Naive thymus-derived CD4-positive, alpha-beta T cell (primary cell): ENCODE measurements at regions of chr1 and their contacts with region 1.

Region 1: GRCh38 chr1:203326830-203327683 is 21.7 kb downstream of the BTG2 start:
- DNase-seq: peak; percentile 90 to 96 (median 94)
- ATAC-seq: peak; percentile 84
- H3K4me3 ChIP-seq: peak overlapping the region; percentile 72
- H3K4me3 Mint-ChIP-seq: peak overlapping the region; percentile 80 to 89 (median 86)
- H3K27ac ChIP-seq: peak overlapping the region; percentile 98
- H3K27ac Mint-ChIP-seq: peak overlapping the region; percentile 90 to 100 (median 99)
- H3K4me1 ChIP-seq: peaks cover 55 to 56% of the 10 kb centered on the region in 2 donors
- H3K4me1 Mint-ChIP-seq: peaks cover 40 to 73% (median 70%) of the 10 kb centered on the region in 7 donors
- H3K27me3 ChIP-seq: no peaks in the 10 kb centered on the region
- H3K27me3 Mint-ChIP-seq: no peaks in the 10 kb centered on the region

Region 2: GRCh38 chr1:203026031-203026989 is 300.7 kb before region 1 on chr1 and contains the start of gene PPFIA4:
- CTCF ChIA-PET with region 1: no interaction called
- POLR2A ChIA-PET with region 1: no interaction called
- intact Hi-C with region 1: loop called (anchors 5 to 10 kb)
- DNase-seq: peak; percentile 72 to 94 (median 89)
- ATAC-seq: peak; percentile 98
- H3K4me3 ChIP-seq: peak within 1 kb of the TSS; percentile 84
- H3K4me3 Mint-ChIP-seq: peak within 1 kb of the TSS; percentile 74 to 95 (median 84)
- H3K27ac ChIP-seq: peak within 1 kb of the TSS; percentile 53
- H3K27ac Mint-ChIP-seq: peak within 1 kb of the TSS; percentile 73 to 96 (median 85)
- H3K4me1 ChIP-seq: peaks cover 0 to 11% of the 10 kb centered on the region in 2 donors
- H3K4me1 Mint-ChIP-seq: peaks cover 0 to 24% (median 14%) of the 10 kb centered on the region in 7 donors
- H3K27me3 ChIP-seq: no peaks in the 10 kb centered on the region
- H3K27me3 Mint-ChIP-seq: peaks cover 0 to 9% (median 0%) of the 10 kb centered on the region in 5 donors
- total RNA-seq, gene PPFIA4: 0.40 to 45.5 (median 2.4) TPM

Region 3: DNA sequence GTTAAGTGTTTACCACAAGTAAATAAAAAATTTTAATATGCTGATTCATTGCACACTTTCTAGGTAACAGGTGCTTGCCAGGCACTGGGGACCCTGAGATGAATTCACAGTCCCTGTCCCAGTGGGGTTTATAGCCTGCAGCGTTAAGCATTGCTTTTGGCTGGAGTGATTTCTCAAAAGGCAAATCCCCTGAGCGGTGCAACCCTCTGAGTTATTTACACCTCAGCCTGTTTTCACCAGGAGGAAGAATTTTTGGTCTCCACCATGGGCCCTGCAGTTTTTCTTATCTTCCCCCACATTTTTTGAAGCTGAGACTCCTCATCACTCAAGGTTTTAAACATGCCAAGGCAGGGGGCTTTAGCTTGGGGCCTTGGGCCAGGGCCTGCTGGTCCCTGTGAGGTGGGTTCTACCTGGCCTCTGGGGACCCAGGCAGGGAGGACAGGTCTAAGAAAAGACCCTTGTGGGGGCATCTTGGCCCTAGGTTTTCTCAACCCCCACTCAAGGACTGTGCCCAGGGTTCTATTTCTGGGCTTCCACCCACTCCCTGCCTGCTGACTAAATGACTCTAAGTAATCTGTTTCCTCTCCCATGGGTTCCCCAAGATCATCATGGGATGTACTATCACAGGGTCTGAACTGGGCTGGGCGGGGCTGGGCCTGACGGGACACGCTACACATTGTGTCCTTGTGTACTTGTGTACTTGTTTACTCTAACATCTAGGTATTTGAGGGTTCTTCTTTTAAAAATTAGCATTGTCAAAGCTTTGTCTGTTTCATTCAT is 87.3 kb before region 1 on chr1:
- CTCF ChIA-PET with region 1: no interaction called
- POLR2A ChIA-PET with region 1: no interaction called
- intact Hi-C with region 1: no loop called
- DNase-seq: no peak
- ATAC-seq: no peak
- H3K4me3 ChIP-seq: no peak overlapping the region
- H3K4me3 Mint-ChIP-seq: no peak overlapping the region
- H3K27ac ChIP-seq: no peak overlapping the region
- H3K27ac Mint-ChIP-seq: no peak overlapping the region
- H3K4me1 ChIP-seq: no peaks in the 10 kb centered on the region
- H3K4me1 Mint-ChIP-seq: no peaks in the 10 kb centered on the region
- H3K27me3 ChIP-seq: no peaks in the 10 kb centered on the region
- H3K27me3 Mint-ChIP-seq: peaks cover 29 to 39% (median 33%) of the 10 kb centered on the region in 5 donors

Region 4: DNA sequence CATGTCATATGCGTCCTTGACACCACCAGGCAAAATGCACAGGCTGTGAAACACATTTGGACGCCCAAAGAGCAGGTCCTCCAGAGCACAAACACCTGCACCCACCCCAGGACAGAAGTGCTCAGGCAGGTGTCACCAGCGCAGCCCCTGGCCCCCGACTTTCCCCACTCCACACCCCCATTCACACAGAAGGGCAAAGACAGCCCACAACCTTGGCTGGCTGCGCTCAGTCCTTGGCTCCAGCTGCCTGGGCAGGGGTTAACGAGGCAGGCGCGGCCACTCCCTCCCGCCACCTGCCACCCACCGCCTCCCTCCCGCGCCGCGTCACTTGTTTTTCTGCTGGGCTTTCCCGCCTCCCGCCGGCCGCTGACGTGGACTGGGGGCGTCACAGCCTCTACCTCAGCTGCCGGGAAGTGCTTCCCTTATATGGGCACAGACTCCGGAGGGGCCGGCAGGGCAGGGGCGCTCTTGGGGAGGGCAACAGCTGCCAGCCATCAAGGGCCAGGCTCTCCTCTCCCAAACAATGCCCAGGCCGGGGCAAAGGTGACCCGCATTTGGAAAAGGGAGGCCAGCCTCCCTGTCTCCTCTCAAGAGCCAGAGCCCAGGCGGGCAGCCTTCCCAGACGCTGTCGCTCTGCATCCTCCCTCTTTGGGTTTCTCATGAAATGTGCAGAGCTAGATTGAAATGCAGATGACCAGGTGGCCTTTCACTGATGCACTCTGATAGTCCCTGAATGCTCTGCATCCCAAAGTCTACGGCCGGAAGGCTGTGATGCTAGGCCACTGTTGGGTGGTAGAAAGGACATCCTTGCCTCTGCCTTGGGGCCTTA is 36.6 kb before region 1 on chr1:
- CTCF ChIA-PET with region 1: interaction called, 79 read pairs
- POLR2A ChIA-PET with region 1: interaction called, 1,812 read pairs
- intact Hi-C with region 1: loop called (anchors 1 kb)
- DNase-seq: peak; percentile 95 to 98 (median 97)
- ATAC-seq: peak; percentile 76
- H3K4me3 ChIP-seq: peak overlapping the region; percentile 57
- H3K4me3 Mint-ChIP-seq: peak overlapping the region; percentile 75 to 89 (median 86)
- H3K27ac ChIP-seq: peak overlapping the region; percentile 98
- H3K27ac Mint-ChIP-seq: peak overlapping the region; percentile 97 to 100 (median 99)
- H3K4me1 ChIP-seq: peaks cover 54 to 58% of the 10 kb centered on the region in 2 donors
- H3K4me1 Mint-ChIP-seq: peaks cover 44 to 92% (median 86%) of the 10 kb centered on the region in 7 donors
- H3K27me3 ChIP-seq: no peaks in the 10 kb centered on the region
- H3K27me3 Mint-ChIP-seq: peaks cover 0 to 3% (median 0%) of the 10 kb centered on the region in 5 donors

Region 5: DNA sequence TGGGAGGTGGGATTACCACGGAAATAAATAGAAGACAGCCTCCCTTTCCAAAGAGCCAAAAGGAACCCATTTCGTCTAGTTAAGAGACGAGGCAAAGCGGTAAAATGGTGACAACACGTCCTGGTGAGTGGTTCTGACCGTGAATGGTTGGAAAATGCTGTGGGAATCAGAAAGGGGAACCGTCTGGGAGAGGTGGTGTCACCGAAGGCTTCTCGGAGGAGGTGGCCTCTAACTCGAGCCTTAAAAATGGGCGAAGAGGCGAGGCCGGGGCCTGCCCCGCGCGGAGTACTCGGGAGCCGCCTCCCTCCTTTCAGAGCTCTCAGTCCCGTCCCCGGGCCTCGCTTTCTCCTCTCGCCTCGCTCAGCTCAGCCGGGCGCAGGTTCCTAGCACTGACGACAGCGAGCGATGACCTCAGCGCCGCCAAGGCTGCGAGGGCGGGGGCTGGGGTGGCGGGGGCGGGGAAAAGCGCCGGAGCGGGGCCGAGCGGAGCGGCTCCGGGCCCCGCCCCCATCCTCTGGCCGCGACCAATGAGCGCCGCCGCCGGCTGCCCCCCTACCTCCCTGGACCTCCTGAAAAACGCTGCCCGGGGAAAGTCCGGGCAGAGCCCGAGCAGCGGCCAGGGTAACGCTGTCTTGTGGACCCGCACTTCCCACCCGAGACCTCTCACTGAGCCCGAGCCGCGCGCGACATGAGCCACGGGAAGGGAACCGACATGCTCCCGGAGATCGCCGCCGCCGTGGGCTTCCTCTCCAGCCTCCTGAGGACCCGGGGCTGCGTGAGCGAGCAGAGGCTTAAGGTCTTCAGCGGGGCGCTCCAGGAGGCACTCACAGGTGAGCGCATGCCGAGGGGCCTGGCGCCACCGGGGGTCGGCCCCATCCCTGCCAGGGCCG is 21.9 kb before region 1 on chr1 and contains the start of gene BTG2:
- CTCF ChIA-PET with region 1: interaction called, 137 read pairs
- POLR2A ChIA-PET with region 1: interaction called, 1,016 read pairs
- intact Hi-C with region 1: loop called (anchors 1 kb)
- DNase-seq: peak; percentile 83 to 94 (median 89)
- ATAC-seq: peak; percentile 90
- H3K4me3 ChIP-seq: peak within 1 kb of the TSS; percentile 86
- H3K4me3 Mint-ChIP-seq: peak within 1 kb of the TSS; percentile 89 to 100 (median 96)
- H3K27ac ChIP-seq: peak within 1 kb of the TSS; percentile 100
- H3K27ac Mint-ChIP-seq: peak within 1 kb of the TSS; percentile 96 to 100 (median 99)
- H3K4me1 ChIP-seq: peaks cover 22 to 40% of the 10 kb centered on the region in 2 donors
- H3K4me1 Mint-ChIP-seq: peaks cover 54 to 65% (median 60%) of the 10 kb centered on the region in 7 donors
- H3K27me3 ChIP-seq: no peaks in the 10 kb centered on the region
- H3K27me3 Mint-ChIP-seq: no peaks in the 10 kb centered on the region
- total RNA-seq, gene BTG2: 141 to 654 (median 241) TPM

Region 6: DNA sequence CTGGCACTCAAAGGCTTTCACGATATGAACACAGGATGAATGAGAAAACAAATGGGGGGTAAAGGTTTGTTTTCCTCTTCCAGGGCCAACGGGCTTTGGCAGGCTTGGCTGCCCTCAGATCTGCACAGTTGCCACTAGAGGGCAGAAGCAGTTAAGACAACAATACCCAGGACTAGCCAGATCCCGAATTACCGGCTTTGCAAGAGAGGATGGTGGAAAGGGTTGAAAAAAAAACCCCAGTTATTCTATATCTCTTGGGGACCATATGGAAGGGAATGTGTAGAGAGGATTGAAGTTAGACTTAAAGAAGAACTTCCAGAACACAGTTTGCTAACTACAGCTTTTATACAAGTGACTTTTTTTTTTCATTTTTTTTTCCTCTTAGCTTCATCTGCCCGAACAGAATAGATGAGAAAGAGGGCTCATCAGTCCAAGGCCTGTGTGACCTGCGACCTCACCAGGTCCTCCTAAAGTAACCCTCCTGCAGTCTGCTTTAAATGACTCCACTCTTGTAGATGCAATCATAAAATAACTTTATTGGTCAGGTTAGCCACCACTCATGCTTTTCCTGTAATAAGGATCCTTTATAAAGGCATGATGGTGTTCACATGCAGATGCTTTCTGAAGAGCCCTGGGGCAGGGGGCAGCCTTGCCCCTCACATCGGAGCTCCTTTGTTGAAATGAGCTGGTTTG is 13.2 kb after region 1 on chr1:
- CTCF ChIA-PET with region 1: interaction called, 144 read pairs
- POLR2A ChIA-PET with region 1: interaction called, 113 read pairs
- intact Hi-C with region 1: loop called (anchors 1 kb)
- DNase-seq: peak in 7 of 9 donors; percentile 39 to 68 (median 62)
- ATAC-seq: peak; percentile 80
- H3K4me3 ChIP-seq: no peak overlapping the region
- H3K4me3 Mint-ChIP-seq: no peak overlapping the region
- H3K27ac ChIP-seq: no peak overlapping the region
- H3K27ac Mint-ChIP-seq: peak overlapping the region in 7 of 9 donors; percentile 1 to 75 (median 34)
- H3K4me1 ChIP-seq: peaks cover 9 to 18% of the 10 kb centered on the region in 2 donors
- H3K4me1 Mint-ChIP-seq: peaks cover 24 to 40% (median 34%) of the 10 kb centered on the region in 7 donors
- H3K27me3 ChIP-seq: no peaks in the 10 kb centered on the region
- H3K27me3 Mint-ChIP-seq: peaks cover 0 to 50% (median 6%) of the 10 kb centered on the region in 5 donors

Region 7: DNA sequence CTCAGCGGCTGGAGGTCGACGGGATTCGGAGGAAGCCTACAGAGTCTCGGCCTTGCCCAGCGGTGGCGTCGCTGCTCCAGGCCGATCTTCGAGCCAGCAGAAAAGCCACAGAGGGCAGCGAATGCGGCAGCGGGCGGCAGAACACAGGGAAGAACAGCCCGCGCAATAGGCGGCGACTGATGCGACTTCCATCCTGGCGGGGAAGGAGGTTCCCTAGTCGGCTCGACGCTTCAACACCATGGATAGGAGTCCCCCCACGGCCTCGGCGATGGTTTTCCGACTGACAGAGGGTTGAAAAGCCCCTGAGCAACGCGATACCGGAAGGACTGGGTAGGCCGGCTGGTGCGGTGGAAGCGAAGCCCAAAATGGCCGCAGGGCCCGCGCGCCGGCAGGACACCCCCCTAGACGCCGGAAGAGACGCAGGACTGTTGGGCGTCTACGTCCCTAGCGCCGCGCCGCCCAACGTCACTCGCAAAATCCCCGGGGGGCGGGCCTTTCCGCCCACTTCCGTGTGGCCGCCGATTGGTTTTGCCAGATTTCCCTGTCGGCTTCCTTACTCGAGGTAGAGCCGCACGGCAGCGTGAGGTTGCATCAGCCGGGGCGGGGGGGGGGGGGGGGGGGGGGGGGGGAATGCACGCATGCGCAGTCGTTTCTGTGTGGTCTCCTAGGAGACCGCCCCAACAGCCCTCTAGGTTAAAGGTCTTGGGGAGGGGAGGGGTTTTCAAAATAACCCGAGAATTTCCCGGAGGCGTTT is 1084.6 kb after region 1 on chr1 and contains the start of gene PPP1R15B:
- CTCF ChIA-PET with region 1: no interaction called
- POLR2A ChIA-PET with region 1: no interaction called
- intact Hi-C with region 1: loop called in 1 of 2 experiments (anchors 5 kb)
- DNase-seq: peak; percentile 92 to 99 (median 98)
- ATAC-seq: peak; percentile 91
- H3K4me3 ChIP-seq: peak within 1 kb of the TSS; percentile 99
- H3K4me3 Mint-ChIP-seq: peak within 1 kb of the TSS; percentile 92 to 99 (median 97)
- H3K27ac ChIP-seq: peak within 1 kb of the TSS; percentile 100
- H3K27ac Mint-ChIP-seq: peak within 1 kb of the TSS; percentile 97 to 100 (median 99)
- H3K4me1 ChIP-seq: peaks cover 0 to 5% of the 10 kb centered on the region in 2 donors
- H3K4me1 Mint-ChIP-seq: peaks cover 8 to 23% (median 14%) of the 10 kb centered on the region in 7 donors
- H3K27me3 ChIP-seq: no peaks in the 10 kb centered on the region
- H3K27me3 Mint-ChIP-seq: no peaks in the 10 kb centered on the region
- total RNA-seq, gene PPP1R15B: 69.5 to 175 (median 73.0) TPM